Panc1 (cell line): ENCODE measurements at regions of chr13 and their contacts with region 1.

Region 1: GRCh38 chr13:70310396-70311119 is 202.3 kb upstream of the KLHL1 start:
- DNase-seq: peak; percentile 17
- ATAC-seq: peak; percentile 90
- H3K4me3 ChIP-seq: no peak overlapping the region
- H3K27ac ChIP-seq: no peak overlapping the region
- H3K4me1 ChIP-seq: no peaks in the 10 kb centered on the region
- H3K27me3 ChIP-seq: no peaks in the 10 kb centered on the region
- CTCF ChIP-seq: peak; percentile 43; the same call in 1 of the 2 replicates

Region 2: DNA sequence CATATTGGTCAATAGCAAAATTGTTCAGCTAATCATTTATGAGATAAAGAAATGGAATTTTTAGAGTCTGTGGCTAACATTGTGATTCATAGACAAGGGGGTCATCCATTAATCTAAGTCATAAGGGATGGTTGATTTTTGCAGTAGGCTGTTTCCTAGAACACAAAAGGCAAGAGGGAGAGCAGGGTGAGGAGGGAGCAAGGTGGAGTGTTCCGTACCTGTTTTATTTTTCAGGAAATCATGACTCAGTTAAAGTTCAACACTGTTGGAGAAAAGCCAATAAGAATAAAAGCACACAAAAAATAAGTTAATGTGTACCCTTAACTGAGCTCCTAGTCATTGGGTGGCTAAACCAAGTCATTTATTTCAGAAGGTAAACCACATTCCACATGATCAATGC is 715.4 kb before region 1 on chr13:
- CTCF ChIA-PET with region 1: interaction called, 13 read pairs
- POLR2A ChIA-PET with region 1: no interaction called
- in situ Hi-C with region 1: no loop called
- intact Hi-C with region 1: no loop called
- DNase-seq: no peak
- ATAC-seq: no peak
- H3K4me3 ChIP-seq: no peak overlapping the region
- H3K27ac ChIP-seq: no peak overlapping the region
- H3K4me1 ChIP-seq: no peaks in the 10 kb centered on the region
- H3K27me3 ChIP-seq: no peaks in the 10 kb centered on the region
- CTCF ChIP-seq: no peak

Region 3: GRCh38 chr13:69857183-69857821 is 453.3 kb before region 1 on chr13:
- CTCF ChIA-PET with region 1: no interaction called
- POLR2A ChIA-PET with region 1: no interaction called
- in situ Hi-C with region 1: no loop called
- intact Hi-C with region 1: loop called (anchors 10 kb)
- DNase-seq: peak; percentile 10
- ATAC-seq: peak; percentile 58; the same call in 1 of the 2 replicates
- H3K4me3 ChIP-seq: no peak overlapping the region
- H3K27ac ChIP-seq: no peak overlapping the region
- H3K4me1 ChIP-seq: no peaks in the 10 kb centered on the region
- H3K27me3 ChIP-seq: no peaks in the 10 kb centered on the region
- CTCF ChIP-seq: peak; percentile 49; the same call in 1 of the 2 replicates

Region 4: GRCh38 chr13:70098669-70099068 is 211.9 kb before region 1 on chr13:
- CTCF ChIA-PET with region 1: no interaction called
- POLR2A ChIA-PET with region 1: no interaction called
- in situ Hi-C with region 1: no loop called
- intact Hi-C with region 1: loop called (anchors 2 kb)
- DNase-seq: no peak
- ATAC-seq: no peak
- H3K4me3 ChIP-seq: no peak overlapping the region
- H3K27ac ChIP-seq: no peak overlapping the region
- H3K4me1 ChIP-seq: no peaks in the 10 kb centered on the region
- H3K27me3 ChIP-seq: no peaks in the 10 kb centered on the region
- CTCF ChIP-seq: no peak

Region 5: DNA sequence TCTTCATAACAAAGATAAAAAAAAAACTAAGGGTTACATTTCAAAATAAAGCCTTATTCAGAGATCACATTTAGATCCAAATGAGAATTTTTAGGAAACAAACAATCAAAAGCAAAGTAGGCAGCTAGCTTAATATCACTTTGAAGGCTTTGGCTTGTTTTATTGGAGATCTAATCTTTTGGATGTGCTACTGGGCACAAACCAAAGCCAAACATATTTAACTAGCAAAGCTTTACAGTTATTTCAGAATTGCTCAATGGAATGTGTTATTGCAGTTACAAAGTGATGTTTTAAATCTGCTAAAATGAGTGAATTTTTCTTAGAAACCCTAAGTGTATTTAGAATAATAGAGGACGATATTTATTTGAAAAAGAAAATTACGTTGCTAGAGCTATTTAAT is 87.6 kb before region 1 on chr13:
- CTCF ChIA-PET with region 1: no interaction called
- POLR2A ChIA-PET with region 1: no interaction called
- in situ Hi-C with region 1: no loop called
- intact Hi-C with region 1: no loop called
- DNase-seq: no peak
- ATAC-seq: no peak
- H3K4me3 ChIP-seq: no peak overlapping the region
- H3K27ac ChIP-seq: no peak overlapping the region
- H3K4me1 ChIP-seq: no peaks in the 10 kb centered on the region
- H3K27me3 ChIP-seq: no peaks in the 10 kb centered on the region
- CTCF ChIP-seq: no peak